Activated CD4-positive, alpha-beta T cell treated with anti-CD3 and anti-CD28 coated beads for 36 hours (primary cell): ENCODE measurements at regions of chr10 and their contacts with region 1.

Region 1: DNA sequence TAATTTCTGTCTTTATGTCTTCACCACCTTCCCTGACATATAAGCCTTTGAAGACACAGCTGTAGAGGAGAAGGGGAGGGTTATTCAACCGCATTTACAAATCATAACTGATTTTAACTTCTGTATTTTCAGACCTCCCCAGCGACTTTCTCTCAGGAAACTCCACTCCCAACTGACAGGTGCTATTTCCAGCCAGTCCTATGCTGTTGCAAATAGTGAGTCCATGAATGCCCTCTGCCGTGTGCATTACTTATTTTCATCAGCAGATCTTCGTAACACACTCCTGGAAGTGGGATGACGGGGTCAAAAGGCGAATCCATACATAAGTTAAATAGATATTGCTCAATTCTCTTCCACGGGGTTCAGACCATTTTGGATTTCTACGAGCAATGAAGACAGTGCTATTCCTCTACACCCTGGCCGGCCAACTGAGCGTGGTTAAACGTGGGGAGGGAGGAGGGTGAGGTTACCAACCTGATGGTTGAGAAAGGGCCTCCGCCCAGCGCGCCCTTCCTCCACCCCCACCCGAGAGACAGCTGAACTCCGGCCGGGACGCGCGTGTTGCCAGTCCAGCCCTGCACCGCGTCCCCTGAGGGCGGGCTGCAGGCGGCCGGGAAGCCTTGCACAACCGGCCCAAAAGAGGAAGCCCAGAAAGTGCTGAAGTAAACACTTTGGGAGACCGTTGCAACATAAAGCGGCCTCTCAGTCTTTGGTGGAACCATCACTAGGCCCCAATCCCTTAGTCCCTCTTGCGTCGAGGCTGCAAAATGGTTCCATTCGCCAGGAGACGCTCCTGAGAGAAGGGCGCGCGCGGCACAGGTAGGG is at the start of gene APBB1IP:
- DNase-seq: peak; percentile 73
- ATAC-seq: peak; percentile 56
- H3K4me3 Mint-ChIP-seq: peak within 1 kb of the TSS; percentile 89
- H3K27ac Mint-ChIP-seq: peak within 1 kb of the TSS; percentile 97
- H3K4me1 Mint-ChIP-seq: peaks cover 49% of the 10 kb centered on the region
- H3K27me3 Mint-ChIP-seq: no peaks in the 10 kb centered on the region
- total RNA-seq, gene APBB1IP: 53.3 to 66.4 TPM

Region 2: DNA sequence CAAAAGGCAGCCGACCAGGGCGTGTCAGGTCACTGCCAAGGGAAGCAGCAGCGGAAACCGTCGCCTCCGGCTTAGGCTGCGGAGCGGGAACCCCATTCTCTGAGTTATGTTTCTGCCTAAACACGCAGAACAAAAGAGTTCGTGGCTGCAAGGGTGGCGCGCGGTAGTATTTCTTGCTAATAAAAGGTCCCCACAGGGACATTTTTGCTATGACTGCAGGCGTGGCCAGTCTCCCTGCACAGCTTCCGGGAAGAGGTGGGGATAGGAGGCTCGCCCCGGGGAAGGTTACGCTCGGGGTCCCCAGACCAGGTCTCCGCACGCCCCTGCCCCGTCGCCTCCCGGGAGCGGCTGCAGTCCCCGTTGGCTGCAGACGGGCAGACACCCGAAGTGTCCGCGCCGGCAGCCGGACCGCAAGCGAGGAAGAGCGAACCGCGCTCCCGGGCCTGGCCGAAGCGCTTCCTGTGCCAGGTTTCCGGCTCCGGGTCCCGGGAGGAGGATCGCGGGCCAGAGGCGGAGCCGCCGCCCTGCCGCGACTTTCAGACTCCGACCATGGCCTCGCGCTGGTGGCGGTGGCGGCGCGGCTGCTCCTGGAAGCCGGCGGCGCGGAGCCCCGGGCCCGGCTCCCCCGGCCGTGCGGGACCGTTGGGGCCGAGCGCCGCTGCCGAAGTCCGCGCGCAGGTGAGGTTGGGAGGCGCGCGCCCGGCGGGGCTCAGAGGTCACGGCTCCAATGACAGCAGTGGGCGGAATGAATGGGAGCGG is 259.5 kb after region 1 on chr10 and contains the start of gene PDSS1:
- CTCF ChIA-PET with region 1: no interaction called
- POLR2A ChIA-PET with region 1: no interaction called
- intact Hi-C with region 1: loop called (anchors 5 to 10 kb)
- DNase-seq: peak; percentile 79
- ATAC-seq: peak; percentile 78
- H3K4me3 Mint-ChIP-seq: peak within 1 kb of the TSS; percentile 91
- H3K27ac Mint-ChIP-seq: peak within 1 kb of the TSS; percentile 95
- H3K4me1 Mint-ChIP-seq: peaks cover 32% of the 10 kb centered on the region
- H3K27me3 Mint-ChIP-seq: no peaks in the 10 kb centered on the region
- total RNA-seq, gene PDSS1: 16.1 to 20.7 TPM

Region 3: DNA sequence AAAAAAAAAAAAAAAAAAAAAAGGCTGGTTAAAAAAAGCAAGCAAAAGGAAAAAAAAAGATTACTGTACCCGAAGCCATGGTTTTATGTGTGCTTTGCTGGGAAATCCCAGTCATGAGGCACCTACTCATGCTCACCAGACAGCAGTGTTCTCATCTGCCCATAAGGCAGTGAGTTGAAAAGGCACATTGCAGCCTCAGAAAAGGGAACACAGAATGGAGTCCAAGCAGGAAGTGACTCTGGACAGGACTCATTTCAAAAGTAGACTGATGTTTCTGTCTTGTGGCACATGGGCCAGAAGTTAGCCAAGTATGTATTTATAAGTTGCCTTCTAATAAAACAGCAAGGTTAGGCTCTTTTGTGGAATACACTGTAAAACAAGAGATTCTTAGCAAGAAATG is 299.9 kb after region 1 on chr10:
- CTCF ChIA-PET with region 1: no interaction called
- POLR2A ChIA-PET with region 1: no interaction called
- intact Hi-C with region 1: loop called in 1 of 2 experiments (anchors 5 kb)
- DNase-seq: peak; percentile 72
- ATAC-seq: peak; percentile 89
- H3K4me3 Mint-ChIP-seq: no peak overlapping the region
- H3K27ac Mint-ChIP-seq: peak overlapping the region; percentile 96
- H3K4me1 Mint-ChIP-seq: peaks cover 47% of the 10 kb centered on the region
- H3K27me3 Mint-ChIP-seq: no peaks in the 10 kb centered on the region